Activated naive CD4-positive, alpha-beta T cell treated with anti-CD3 and anti-CD28 coated beads for 36 hours (primary cell): ENCODE measurements at regions of chr10 and their contacts with region 1.

Region 1: GRCh38 chr10:88386821-88387773 is 196.0 kb downstream of the RNLS start:
- DNase-seq: peak; percentile 7
- H3K4me3 Mint-ChIP-seq: no peak overlapping the region
- H3K27ac Mint-ChIP-seq: no peak overlapping the region
- H3K4me1 Mint-ChIP-seq: peaks cover 25% of the 10 kb centered on the region
- H3K27me3 Mint-ChIP-seq: no peaks in the 10 kb centered on the region

Region 2: GRCh38 chr10:87659571-87660483 is 727.3 kb before region 1 on chr10 and contains the start of gene PAPSS2:
- CTCF ChIA-PET with region 1: no interaction called
- intact Hi-C with region 1: loop called (anchors 2 kb)
- DNase-seq: peak; percentile 27
- H3K4me3 Mint-ChIP-seq: peak within 1 kb of the TSS; percentile 74
- H3K27ac Mint-ChIP-seq: no peak within 1 kb of the TSS
- H3K4me1 Mint-ChIP-seq: peaks cover 10% of the 10 kb centered on the region
- H3K27me3 Mint-ChIP-seq: peaks cover 48% of the 10 kb centered on the region
- total RNA-seq, gene PAPSS2: 0.38 TPM in 1 of 2 experiments, not detected in the other

Region 3: DNA sequence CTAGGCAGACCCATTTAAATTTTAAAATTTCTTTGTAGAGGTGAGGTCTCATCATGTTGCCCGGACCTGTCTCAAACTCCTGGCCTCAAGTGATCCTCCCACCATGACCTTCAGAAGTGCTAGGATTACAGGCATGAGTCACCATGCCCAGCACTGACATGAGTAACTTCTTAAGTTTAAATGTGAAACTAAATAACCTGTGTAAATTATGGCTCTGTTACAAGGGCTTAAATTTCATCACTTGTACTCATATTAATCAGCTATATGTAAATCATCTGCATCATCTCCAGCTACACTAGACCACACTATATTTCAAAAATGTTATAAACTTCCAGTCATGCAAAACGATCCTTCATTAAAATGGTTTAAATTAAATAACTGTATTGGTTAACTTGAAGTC is 625.2 kb before region 1 on chr10:
- CTCF ChIA-PET with region 1: no interaction called
- intact Hi-C with region 1: loop called (anchors 2 kb)
- DNase-seq: peak; percentile 77
- H3K4me3 Mint-ChIP-seq: no peak overlapping the region
- H3K27ac Mint-ChIP-seq: peak overlapping the region; percentile 86
- H3K4me1 Mint-ChIP-seq: peaks cover 37% of the 10 kb centered on the region
- H3K27me3 Mint-ChIP-seq: no peaks in the 10 kb centered on the region

Region 4: GRCh38 chr10:87850742-87851205 is 536.3 kb before region 1 on chr10:
- CTCF ChIA-PET with region 1: interaction called, 15 read pairs
- intact Hi-C with region 1: loop called (anchors 1 kb)
- DNase-seq: peak; percentile 71
- H3K4me3 Mint-ChIP-seq: no peak overlapping the region
- H3K27ac Mint-ChIP-seq: no peak overlapping the region
- H3K4me1 Mint-ChIP-seq: peaks cover 4% of the 10 kb centered on the region
- H3K27me3 Mint-ChIP-seq: no peaks in the 10 kb centered on the region

Region 5: GRCh38 chr10:88194041-88194887 is 192.8 kb before region 1 on chr10:
- CTCF ChIA-PET with region 1: interaction called, 3 read pairs
- intact Hi-C with region 1: loop called (anchors 5 kb)
- DNase-seq: peak; percentile 24
- H3K4me3 Mint-ChIP-seq: no peak overlapping the region
- H3K27ac Mint-ChIP-seq: no peak overlapping the region
- H3K4me1 Mint-ChIP-seq: peaks cover 34% of the 10 kb centered on the region
- H3K27me3 Mint-ChIP-seq: no peaks in the 10 kb centered on the region

Region 6: DNA sequence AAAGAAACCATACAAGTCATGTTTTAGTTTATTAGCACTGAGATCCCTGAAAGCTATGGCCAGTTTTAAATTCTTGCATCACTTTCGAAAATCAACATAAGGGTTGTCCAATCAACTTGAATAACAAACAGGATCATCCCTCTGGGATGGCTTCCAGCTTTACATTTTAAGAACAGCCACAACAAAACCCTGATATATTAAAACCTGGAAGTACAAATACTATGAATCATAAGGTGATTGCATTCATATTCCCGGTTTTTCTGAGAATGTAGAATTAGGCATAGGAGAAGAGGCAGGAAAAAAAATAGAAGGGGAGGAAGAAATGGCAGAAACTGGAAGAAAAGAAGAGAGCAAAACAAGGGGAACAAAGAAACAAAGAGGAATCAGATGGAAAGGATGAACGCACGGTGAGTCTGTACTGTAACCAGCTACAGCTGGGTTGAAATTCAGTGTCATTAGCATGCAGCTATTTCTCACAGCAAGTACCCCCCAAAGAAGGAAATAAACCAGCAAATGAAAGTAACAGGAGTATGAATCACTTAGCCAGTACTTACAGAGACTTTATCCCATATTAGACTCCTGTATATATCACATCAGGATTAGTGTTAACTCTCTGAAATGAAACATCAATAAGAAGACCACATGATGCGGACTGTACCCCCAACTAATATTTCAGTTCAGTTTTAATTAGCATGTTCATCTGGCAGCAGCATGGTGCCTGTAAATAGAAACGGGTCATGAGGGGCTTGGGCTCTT is 105.3 kb before region 1 on chr10:
- CTCF ChIA-PET with region 1: no interaction called
- intact Hi-C with region 1: no loop called
- DNase-seq: no peak
- H3K4me3 Mint-ChIP-seq: no peak overlapping the region
- H3K27ac Mint-ChIP-seq: no peak overlapping the region
- H3K4me1 Mint-ChIP-seq: peaks cover 26% of the 10 kb centered on the region
- H3K27me3 Mint-ChIP-seq: no peaks in the 10 kb centered on the region

Region 7: DNA sequence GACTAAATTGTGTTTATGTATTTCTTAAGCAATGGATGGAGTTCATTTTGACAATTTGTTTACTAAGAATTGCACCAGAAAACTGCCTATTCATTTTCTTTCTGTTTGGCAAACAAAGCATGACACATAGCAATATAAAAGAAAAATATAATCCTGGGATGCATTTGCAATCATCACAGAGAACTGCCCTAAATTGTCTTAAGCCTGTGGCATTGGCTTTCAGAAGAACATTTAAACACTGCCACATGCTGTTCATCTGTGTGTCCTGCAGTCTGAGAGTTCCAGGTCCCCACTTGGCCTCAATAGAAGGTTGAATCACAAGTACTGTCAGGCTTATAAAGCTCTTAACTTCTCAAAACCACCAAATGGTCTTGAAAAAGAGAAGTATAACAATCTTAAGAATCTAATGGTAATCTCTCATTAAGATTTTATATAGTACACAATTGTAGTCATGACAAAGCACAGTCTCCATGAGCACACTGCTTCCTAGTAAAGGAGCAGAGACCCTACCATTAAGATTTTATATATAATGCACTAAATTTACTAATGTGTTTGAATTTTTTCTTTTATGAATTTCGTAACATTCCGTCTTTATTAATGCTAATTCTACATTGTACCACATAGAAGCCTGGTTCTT is 166.1 kb after region 1 on chr10:
- CTCF ChIA-PET with region 1: interaction called, 5 read pairs
- intact Hi-C with region 1: loop called (anchors 5 kb)
- DNase-seq: peak; percentile 54
- H3K4me3 Mint-ChIP-seq: no peak overlapping the region
- H3K27ac Mint-ChIP-seq: no peak overlapping the region
- H3K4me1 Mint-ChIP-seq: no peaks in the 10 kb centered on the region
- H3K27me3 Mint-ChIP-seq: no peaks in the 10 kb centered on the region

Region 8: DNA sequence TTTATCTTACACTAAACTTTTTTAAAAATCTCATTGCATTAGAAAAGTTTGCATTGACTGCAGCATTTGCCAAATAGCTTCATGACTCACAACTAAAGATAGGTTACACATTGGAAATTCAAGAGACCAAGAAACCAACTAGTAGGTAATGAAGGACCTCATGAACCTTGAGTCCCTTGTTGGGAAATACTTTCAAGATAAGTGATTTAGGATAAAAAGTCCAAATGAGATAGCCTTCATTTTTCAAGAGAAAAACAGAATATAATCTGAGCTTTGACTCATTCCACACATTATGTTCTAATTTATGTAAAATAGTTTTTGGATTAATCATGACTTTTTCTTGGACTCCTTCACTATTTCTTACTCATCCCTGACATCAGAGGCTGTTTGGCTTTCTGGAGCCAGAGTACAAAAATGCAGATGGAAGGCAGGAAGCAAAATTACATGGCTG is 264.0 kb after region 1 on chr10:
- CTCF ChIA-PET with region 1: no interaction called
- intact Hi-C with region 1: no loop called
- DNase-seq: no peak
- H3K4me3 Mint-ChIP-seq: no peak overlapping the region
- H3K27ac Mint-ChIP-seq: no peak overlapping the region
- H3K4me1 Mint-ChIP-seq: peaks cover 2% of the 10 kb centered on the region
- H3K27me3 Mint-ChIP-seq: peaks cover 14% of the 10 kb centered on the region